ENCODE measurements at regions of chr7 and their contacts with region 1.

Region 1: DNA sequence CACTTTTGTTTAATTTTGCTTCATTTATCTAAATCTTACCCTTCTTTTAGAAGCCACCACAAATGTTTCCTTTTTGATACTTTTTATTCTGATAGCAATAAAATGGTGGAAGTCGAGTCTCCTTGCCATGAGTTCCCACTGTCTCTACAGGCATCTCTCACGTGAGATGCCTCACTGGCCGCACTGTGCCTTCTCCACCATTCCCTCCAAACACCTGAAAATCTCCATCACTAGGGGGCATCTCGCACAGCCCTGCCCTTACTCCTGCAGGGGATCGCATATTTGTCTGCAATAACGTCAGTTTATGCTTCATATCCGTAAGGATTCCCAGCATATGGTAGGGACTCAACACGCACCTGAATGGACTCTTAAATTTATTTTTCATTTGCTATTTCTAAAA is 56.3 kb upstream of the NCAPG2 start:
- DNase-seq: peak in 5 of 9 donors; percentile 32 to 52 (median 45)
- ATAC-seq: peak; percentile 57
- H3K4me3 ChIP-seq: no peak overlapping the region
- H3K4me3 Mint-ChIP-seq: no peak overlapping the region
- H3K27ac ChIP-seq: no peak overlapping the region
- H3K27ac Mint-ChIP-seq: peak overlapping the region in 8 of 9 donors; percentile 22 to 87 (median 53)
- H3K4me1 ChIP-seq: no peaks in the 10 kb centered on the region
- H3K4me1 Mint-ChIP-seq: peaks cover 0 to 28% (median 6%) of the 10 kb centered on the region in 7 donors
- H3K27me3 ChIP-seq: no peaks in the 10 kb centered on the region
- H3K27me3 Mint-ChIP-seq: no peaks in the 10 kb centered on the region

Region 2: GRCh38 chr7:157926107-157926506 is 834.8 kb before region 1 on chr7:
- CTCF ChIA-PET with region 1: no interaction called
- POLR2A ChIA-PET with region 1: no interaction called
- intact Hi-C with region 1: no loop called
- DNase-seq: peak in 1 of 9 donors; percentile 6
- ATAC-seq: peak; percentile 27
- H3K4me3 ChIP-seq: no peak overlapping the region
- H3K4me3 Mint-ChIP-seq: peak overlapping the region in 5 of 10 donors; percentile 1 to 65 (median 26)
- H3K27ac ChIP-seq: no peak overlapping the region
- H3K27ac Mint-ChIP-seq: peak overlapping the region in 6 of 9 donors; percentile 4 to 77 (median 24)
- H3K4me1 ChIP-seq: peaks cover 0 to 4% of the 10 kb centered on the region in 2 donors
- H3K4me1 Mint-ChIP-seq: peaks cover 4 to 18% (median 12%) of the 10 kb centered on the region in 7 donors
- H3K27me3 ChIP-seq: no peaks in the 10 kb centered on the region
- H3K27me3 Mint-ChIP-seq: peaks cover 0 to 4% (median 0%) of the 10 kb centered on the region in 5 donors

Region 3: GRCh38 chr7:158541346-158542010 is 219.5 kb before region 1 on chr7:
- CTCF ChIA-PET with region 1: no interaction called
- POLR2A ChIA-PET with region 1: no interaction called
- intact Hi-C with region 1: no loop called
- DNase-seq: peak in 4 of 9 donors; percentile 7 to 25 (median 16)
- ATAC-seq: peak; percentile 55
- H3K4me3 ChIP-seq: no peak overlapping the region
- H3K4me3 Mint-ChIP-seq: peak overlapping the region in 2 of 10 donors; percentile 43 to 44
- H3K27ac ChIP-seq: no peak overlapping the region
- H3K27ac Mint-ChIP-seq: no peak overlapping the region
- H3K4me1 ChIP-seq: no peaks in the 10 kb centered on the region
- H3K4me1 Mint-ChIP-seq: peaks cover 0 to 7% (median 6%) of the 10 kb centered on the region in 7 donors
- H3K27me3 ChIP-seq: no peaks in the 10 kb centered on the region
- H3K27me3 Mint-ChIP-seq: no peaks in the 10 kb centered on the region

Region 4: GRCh38 chr7:158774952-158775351 is 14.0 kb after region 1 on chr7:
- CTCF ChIA-PET with region 1: interaction called, 4 read pairs
- POLR2A ChIA-PET with region 1: interaction called, 3 read pairs
- intact Hi-C with region 1: loop called in 1 of 2 experiments (anchors 2 kb)
- DNase-seq: no peak
- ATAC-seq: no peak
- H3K4me3 ChIP-seq: no peak overlapping the region
- H3K4me3 Mint-ChIP-seq: peak overlapping the region in 8 of 10 donors; percentile 45 to 75 (median 62)
- H3K27ac ChIP-seq: peak overlapping the region; percentile 11
- H3K27ac Mint-ChIP-seq: peak overlapping the region in 7 of 9 donors; percentile 64 to 94 (median 81)
- H3K4me1 ChIP-seq: peaks cover 8 to 58% of the 10 kb centered on the region in 2 donors
- H3K4me1 Mint-ChIP-seq: peaks cover 0 to 52% (median 30%) of the 10 kb centered on the region in 7 donors
- H3K27me3 ChIP-seq: no peaks in the 10 kb centered on the region
- H3K27me3 Mint-ChIP-seq: no peaks in the 10 kb centered on the region

Region 5: DNA sequence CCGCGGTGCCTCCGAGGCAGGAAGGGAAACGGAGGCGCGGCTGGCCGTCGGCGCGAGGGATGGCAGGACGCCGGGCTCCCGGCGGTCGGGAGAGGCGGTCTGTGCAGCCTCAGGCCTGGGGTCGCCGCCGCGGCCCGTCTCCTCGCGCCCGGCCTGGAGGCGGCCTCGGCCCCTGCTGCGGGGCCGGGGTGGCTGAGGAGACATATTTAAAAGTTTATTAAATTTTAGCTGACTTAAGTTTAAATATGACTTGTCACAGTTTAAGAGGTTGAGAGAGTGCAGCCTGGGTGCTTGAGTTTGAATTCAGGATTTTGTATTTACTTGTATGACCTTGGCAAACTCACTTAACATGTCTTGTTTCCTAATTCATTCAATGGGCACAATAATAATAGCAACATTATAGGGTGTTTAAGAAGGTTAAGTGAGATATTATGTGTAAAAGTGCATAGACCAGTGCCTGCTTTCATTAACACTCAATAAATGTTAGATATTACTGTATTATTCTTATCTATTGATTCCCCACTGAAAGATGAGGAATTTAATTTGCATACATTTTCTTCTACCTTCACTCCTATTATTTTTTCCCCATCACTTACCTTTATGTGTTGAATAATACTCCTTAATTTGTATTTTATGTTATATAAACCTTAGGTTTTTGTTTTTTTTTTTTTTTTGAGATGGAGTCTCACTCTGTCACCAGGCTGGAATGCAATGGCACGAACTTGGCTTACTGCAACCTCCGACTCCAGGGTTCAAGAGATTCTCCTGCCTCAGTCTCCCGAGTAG is 96.1 kb after region 1 on chr7:
- CTCF ChIA-PET with region 1: no interaction called
- POLR2A ChIA-PET with region 1: no interaction called
- intact Hi-C with region 1: loop called in 1 of 2 experiments (anchors 2 kb)
- DNase-seq: peak in 2 of 9 donors; percentile 15 to 17
- ATAC-seq: no peak
- H3K4me3 ChIP-seq: peak overlapping the region; percentile 77
- H3K4me3 Mint-ChIP-seq: peak overlapping the region; percentile 67 to 98 (median 94)
- H3K27ac ChIP-seq: peak overlapping the region; percentile 83
- H3K27ac Mint-ChIP-seq: peak overlapping the region in 8 of 9 donors; percentile 24 to 92 (median 84)
- H3K4me1 ChIP-seq: peaks cover 0 to 22% of the 10 kb centered on the region in 2 donors
- H3K4me1 Mint-ChIP-seq: peaks cover 15 to 46% (median 39%) of the 10 kb centered on the region in 7 donors
- H3K27me3 ChIP-seq: no peaks in the 10 kb centered on the region
- H3K27me3 Mint-ChIP-seq: peaks cover 0 to 4% (median 0%) of the 10 kb centered on the region in 5 donors

Region 6: GRCh38 chr7:158917818-158918217 is 156.9 kb after region 1 on chr7:
- CTCF ChIA-PET with region 1: no interaction called
- POLR2A ChIA-PET with region 1: no interaction called
- intact Hi-C with region 1: no loop called
- DNase-seq: no peak
- ATAC-seq: no peak
- H3K4me3 ChIP-seq: no peak overlapping the region
- H3K4me3 Mint-ChIP-seq: no peak overlapping the region
- H3K27ac ChIP-seq: no peak overlapping the region
- H3K27ac Mint-ChIP-seq: no peak overlapping the region
- H3K4me1 ChIP-seq: no peaks in the 10 kb centered on the region
- H3K4me1 Mint-ChIP-seq: peaks cover 0 to 3% (median 0%) of the 10 kb centered on the region in 7 donors
- H3K27me3 ChIP-seq: no peaks in the 10 kb centered on the region
- H3K27me3 Mint-ChIP-seq: no peaks in the 10 kb centered on the region